GM10248 (cell line): ENCODE measurements at regions of chr1 and their contacts with region 1.

Region 1: DNA sequence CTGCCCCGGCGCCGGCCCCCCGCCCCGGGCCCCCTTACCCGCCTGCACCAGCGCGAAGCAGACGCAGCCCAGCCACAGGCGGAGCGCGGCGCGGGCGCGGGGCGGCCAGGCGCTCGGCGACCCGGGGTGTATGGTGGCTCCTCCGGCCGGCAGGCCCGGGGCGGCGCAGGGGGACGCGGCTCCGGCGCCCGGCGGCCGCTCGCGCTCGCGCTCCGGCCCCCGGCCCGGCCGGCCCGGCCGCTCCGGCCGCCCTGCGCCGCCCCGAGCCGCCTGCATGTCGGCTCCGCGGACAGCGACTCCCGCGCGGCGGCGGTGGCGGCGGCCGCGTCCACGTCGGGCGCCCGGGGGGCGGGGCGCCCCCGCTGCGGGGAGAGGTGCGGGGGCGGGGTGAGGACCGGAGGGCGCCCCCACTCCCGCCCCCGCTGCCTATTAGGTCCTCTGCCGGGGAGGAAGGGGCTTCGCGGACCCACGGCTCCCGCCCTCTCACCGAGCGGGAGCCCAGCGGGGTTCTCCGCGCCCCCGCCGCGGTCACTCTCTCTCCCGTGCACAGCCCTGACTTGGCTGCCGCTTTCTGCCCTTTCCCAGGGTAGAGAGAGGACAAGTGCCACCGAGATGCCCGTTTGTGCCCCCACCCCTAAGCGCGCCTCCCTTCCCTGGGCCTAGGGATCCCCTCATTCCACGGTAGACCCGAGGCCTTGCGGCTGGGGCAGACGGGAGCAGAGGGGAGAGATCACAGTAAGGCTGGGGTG is at the start of gene FNDC5:
- DNase-seq: no peak
- CTCF ChIP-seq: no peak

Region 2: GRCh38 chr1:32733582-32734321 is 137.0 kb before region 1 on chr1:
- CTCF ChIA-PET with region 1: no interaction called
- POLR2A ChIA-PET with region 1: no interaction called
- DNase-seq: peak; percentile 56
- CTCF ChIP-seq: no peak

Region 3: GRCh38 chr1:33010932-33011731 is 140.3 kb after region 1 on chr1:
- CTCF ChIA-PET with region 1: no interaction called
- POLR2A ChIA-PET with region 1: no interaction called
- DNase-seq: no peak
- CTCF ChIP-seq: no peak

Region 4: GRCh38 chr1:33086384-33086850 is 215.6 kb after region 1 on chr1:
- CTCF ChIA-PET with region 1: interaction called, 55 read pairs
- POLR2A ChIA-PET with region 1: no interaction called
- DNase-seq: peak; percentile 62
- CTCF ChIP-seq: peak; percentile 81